IMR-90 (cell line): ENCODE measurements at regions of chr11 and their contacts with region 1.

Region 1: DNA sequence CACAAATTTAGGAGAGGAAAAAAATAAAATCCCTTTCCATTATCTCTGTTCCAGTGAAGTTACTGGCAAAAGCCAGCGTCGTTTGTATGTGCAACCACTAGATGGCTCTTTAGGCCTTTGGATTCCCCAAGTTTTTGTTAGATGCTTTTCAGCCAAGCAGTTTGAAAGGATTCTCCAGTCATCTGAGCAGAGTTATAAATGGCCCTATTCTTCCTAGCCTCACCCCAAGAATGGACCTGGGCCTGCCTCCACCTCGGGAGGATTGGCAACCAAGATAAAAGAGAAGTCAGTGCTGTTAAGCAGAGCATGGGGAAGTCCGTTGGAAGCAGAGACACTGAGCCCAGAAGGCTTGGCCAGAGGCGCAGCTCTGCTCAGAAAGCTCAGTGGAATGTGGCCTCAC is 15.4 kb downstream of the FAM181B start:
- DNase-seq: peak; percentile 49
- ATAC-seq: peak; percentile 93
- H3K4me3 ChIP-seq: no peak overlapping the region
- H3K27ac ChIP-seq: no peak overlapping the region
- H3K4me1 ChIP-seq: no peaks in the 10 kb centered on the region
- H3K27me3 ChIP-seq: peaks cover 9% of the 10 kb centered on the region
- CTCF ChIP-seq: peak; percentile 72
- POLR2A ChIP-seq: no peak
- RAD21 ChIP-seq: peak; percentile 69

Region 2: DNA sequence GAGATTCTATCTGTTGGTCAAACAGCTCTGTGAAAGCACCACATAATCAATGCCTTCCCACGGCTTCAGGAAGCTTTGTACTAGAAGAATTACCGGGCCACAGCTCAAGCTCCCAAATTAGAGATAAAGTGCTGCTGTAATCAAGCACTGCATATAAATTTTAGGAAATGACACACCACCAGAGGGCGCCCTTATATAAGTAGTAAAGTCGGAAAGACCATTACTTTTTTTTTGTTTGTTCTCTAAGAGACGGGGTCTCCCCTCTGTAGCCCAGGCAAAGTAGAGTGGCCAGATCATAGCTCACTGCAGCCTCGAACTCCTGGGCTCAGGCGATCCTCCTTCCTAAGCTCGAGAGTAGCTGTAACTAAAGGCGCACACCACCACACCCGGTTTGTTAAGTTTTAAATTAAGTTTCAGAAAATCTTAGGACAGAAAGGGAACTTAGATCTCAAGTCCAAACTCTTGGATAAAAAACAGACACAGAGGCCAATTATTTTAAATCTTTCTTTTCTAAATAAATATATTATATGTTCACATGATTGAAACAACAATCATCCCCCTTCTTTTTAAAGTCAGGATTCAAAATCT is 149.3 kb after region 1 on chr11:
- CTCF ChIA-PET with region 1: interaction called, 12 read pairs
- POLR2A ChIA-PET with region 1: no interaction called
- dilution Hi-C with region 1: no loop called
- in situ Hi-C with region 1: no loop called
- intact Hi-C with region 1: loop called (anchors 1 kb)
- DNase-seq: peak; percentile 76
- ATAC-seq: peak; percentile 21; the same call in 1 of the 2 replicates
- H3K4me3 ChIP-seq: peak overlapping the region; percentile 29; the same call in 1 of the 2 replicates
- H3K27ac ChIP-seq: no peak overlapping the region
- H3K4me1 ChIP-seq: peaks cover 5% of the 10 kb centered on the region; the same call in 1 of the 2 replicates
- H3K27me3 ChIP-seq: no peaks in the 10 kb centered on the region
- CTCF ChIP-seq: peak; percentile 71
- POLR2A ChIP-seq: no peak
- RAD21 ChIP-seq: peak; percentile 63

Region 3: DNA sequence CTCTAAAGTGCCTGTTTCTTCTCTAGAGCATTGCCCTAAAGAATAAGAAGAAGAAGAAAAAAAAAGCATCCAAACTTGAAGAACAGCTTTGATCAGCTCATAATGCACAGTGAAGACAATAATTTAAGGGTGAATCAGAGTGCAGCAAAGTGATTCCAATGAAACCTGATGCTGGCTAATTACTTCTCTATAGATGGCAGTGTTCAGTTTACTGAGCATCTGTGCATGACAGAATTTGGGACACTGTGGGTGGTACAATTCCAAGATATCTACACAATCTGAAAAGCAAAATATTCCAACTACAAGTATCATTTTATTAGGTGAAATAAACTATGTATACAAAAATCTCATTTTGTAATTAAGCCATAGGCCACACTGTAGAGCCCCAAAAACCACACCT is 1018.4 kb after region 1 on chr11:
- CTCF ChIA-PET with region 1: no interaction called
- POLR2A ChIA-PET with region 1: interaction called, 25 read pairs
- dilution Hi-C with region 1: no loop called
- in situ Hi-C with region 1: no loop called
- intact Hi-C with region 1: no loop called
- DNase-seq: no peak
- ATAC-seq: no peak
- H3K4me3 ChIP-seq: no peak overlapping the region
- H3K27ac ChIP-seq: no peak overlapping the region
- H3K4me1 ChIP-seq: no peaks in the 10 kb centered on the region
- H3K27me3 ChIP-seq: no peaks in the 10 kb centered on the region
- CTCF ChIP-seq: no peak
- POLR2A ChIP-seq: no peak
- RAD21 ChIP-seq: no peak